Breast epithelium (tissue), 4 donors: ENCODE measurements at regions of chr17 and their contacts with region 1.

Region 1: GRCh38 chr17:72529386-72529785 is 408.6 kb downstream of the SOX9 start:
- DNase-seq: no peak
- H3K4me3 ChIP-seq: no peak overlapping the region
- H3K27ac ChIP-seq: no peak overlapping the region
- H3K4me1 ChIP-seq: no peaks in the 10 kb centered on the region
- H3K27me3 ChIP-seq: no peaks in the 10 kb centered on the region
- CTCF ChIP-seq: no peak
- POLR2A ChIP-seq: no peak

Region 2: GRCh38 chr17:70938336-70938735 is 1591.0 kb before region 1 on chr17:
- intact Hi-C with region 1: loop called (anchors 10 kb)
- DNase-seq: no peak
- H3K4me3 ChIP-seq: no peak overlapping the region
- H3K27ac ChIP-seq: no peak overlapping the region
- H3K4me1 ChIP-seq: no peaks in the 10 kb centered on the region
- H3K27me3 ChIP-seq: no peaks in the 10 kb centered on the region
- CTCF ChIP-seq: no peak
- POLR2A ChIP-seq: no peak